ENCODE measurements at regions of chr19 and their contacts with region 1.

Region 1: DNA sequence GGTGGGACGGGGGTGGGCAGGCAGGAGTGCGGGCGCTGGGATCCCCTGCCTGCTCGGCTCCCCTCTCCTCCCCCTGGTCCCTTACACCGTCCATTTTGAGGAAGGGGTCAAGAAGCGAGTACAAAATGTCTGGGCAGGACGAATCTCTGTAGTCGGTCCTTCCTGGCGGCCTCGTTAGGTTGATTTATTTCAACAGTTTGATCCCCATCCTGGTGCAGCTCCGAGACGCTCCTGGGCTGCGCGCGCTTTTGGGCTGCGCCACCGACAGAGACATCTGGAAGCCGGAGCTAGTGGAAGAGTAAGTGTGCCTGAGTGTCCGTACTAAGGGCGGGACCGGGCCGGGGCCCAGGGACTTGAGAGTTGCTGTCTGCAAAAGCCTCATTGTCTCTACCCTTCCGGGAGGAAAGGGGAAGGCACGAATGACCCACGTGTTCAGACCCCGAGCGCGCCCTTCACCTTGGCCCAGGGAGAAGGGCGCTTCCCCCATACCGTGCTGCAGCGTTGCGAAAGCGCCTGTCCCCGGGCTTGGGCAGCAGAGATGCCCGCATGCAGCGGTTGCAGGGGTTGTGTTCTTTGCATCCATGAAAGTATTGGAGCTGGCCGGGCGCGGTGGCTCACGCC is 1.8 kb downstream of the ZNF114 start:
- DNase-seq: peak; percentile 63
- CTCF ChIP-seq: no peak

Region 2: GRCh38 chr19:48255376-48256303 is 16.0 kb before region 1 on chr19 and contains the start of gene CARD8:
- CTCF ChIA-PET with region 1: interaction called, 13 read pairs
- POLR2A ChIA-PET with region 1: no interaction called
- DNase-seq: peak; percentile 72
- CTCF ChIP-seq: no peak

Region 3: GRCh38 chr19:48290771-48291488 is 19.3 kb after region 1 on chr19:
- CTCF ChIA-PET with region 1: interaction called, 10 read pairs
- POLR2A ChIA-PET with region 1: no interaction called
- DNase-seq: peak; percentile 68
- CTCF ChIP-seq: peak; percentile 94

Region 4: GRCh38 chr19:48333467-48334384 is 62.1 kb after region 1 on chr19:
- CTCF ChIA-PET with region 1: interaction called, 13 read pairs
- POLR2A ChIA-PET with region 1: no interaction called
- DNase-seq: peak; percentile 94
- CTCF ChIP-seq: peak; percentile 96

Measured in GM10248 (cell line).